Calu3 (cell line): ENCODE measurements at regions of chr12 and their contacts with region 1.

Region 1: DNA sequence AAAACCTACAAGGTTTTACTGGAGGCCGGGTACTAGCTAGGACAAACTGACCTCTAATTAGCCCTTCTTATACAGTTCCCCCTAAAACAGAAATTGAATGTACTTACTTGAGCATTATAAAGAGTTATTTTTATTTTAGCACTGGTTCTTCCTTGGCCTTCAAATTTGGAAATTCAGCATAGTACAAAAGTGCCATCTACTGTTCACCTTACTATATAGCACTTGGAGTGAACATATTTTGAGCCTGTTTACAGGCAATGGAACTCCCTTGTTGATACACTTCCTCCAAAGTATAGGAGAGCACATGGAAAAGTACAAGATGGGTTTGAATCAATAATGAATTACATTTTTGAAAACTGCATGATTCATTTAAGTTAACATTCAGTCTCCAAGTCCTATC is 3.9 kb upstream of the POC1B start:
- DNase-seq: no peak
- H3K4me3 Mint-ChIP-seq: no peak overlapping the region
- H3K27ac Mint-ChIP-seq: no peak overlapping the region
- H3K4me1 Mint-ChIP-seq: peaks cover 38% of the 10 kb centered on the region
- H3K27me3 Mint-ChIP-seq: no peaks in the 10 kb centered on the region
- CTCF ChIP-seq: peak; percentile 56

Region 2: GRCh38 chr12:89019408-89020120 is 510.2 kb before region 1 on chr12:
- CTCF ChIA-PET with region 1: interaction called, 5 read pairs
- intact Hi-C with region 1: loop called (anchors 1 kb)
- DNase-seq: peak; percentile 82
- H3K4me3 Mint-ChIP-seq: no peak overlapping the region
- H3K27ac Mint-ChIP-seq: no peak overlapping the region
- H3K4me1 Mint-ChIP-seq: peaks cover 21% of the 10 kb centered on the region
- H3K27me3 Mint-ChIP-seq: no peaks in the 10 kb centered on the region
- CTCF ChIP-seq: peak; percentile 91

Region 3: DNA sequence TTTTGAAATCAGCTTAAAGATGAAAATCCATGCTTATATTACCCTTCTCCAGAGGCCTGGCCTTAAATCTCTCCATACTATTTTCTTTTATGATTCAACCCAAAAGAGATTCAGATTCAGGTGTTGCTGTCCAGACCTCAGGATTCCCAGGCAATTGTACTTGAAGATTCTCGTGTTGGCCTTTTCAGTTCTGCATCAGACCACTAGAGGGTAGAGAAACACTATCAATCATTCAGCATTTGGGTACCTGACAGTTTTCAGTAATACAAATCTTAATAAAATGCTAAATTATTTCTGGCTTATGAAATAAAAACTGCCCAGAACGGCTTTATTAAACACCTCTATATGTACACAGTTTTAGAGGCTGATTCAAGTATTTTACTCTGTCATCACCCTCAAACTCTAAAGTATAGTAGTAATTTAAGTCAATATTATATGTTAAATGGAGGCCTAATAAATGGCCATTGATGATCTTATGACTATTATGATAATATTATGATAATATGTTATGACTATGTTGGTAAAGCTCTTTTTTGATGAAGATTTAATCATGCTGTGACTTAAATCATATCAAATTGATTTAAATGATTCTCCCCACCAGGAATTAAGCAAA is 478.6 kb before region 1 on chr12:
- CTCF ChIA-PET with region 1: no interaction called
- intact Hi-C with region 1: loop called (anchors 1 kb)
- DNase-seq: peak; percentile 52
- H3K4me3 Mint-ChIP-seq: no peak overlapping the region
- H3K27ac Mint-ChIP-seq: no peak overlapping the region
- H3K4me1 Mint-ChIP-seq: no peaks in the 10 kb centered on the region
- H3K27me3 Mint-ChIP-seq: no peaks in the 10 kb centered on the region
- CTCF ChIP-seq: peak; percentile 79